GM12878 (cell line): ENCODE measurements at regions of chr7 and their contacts with region 1.

Region 1: DNA sequence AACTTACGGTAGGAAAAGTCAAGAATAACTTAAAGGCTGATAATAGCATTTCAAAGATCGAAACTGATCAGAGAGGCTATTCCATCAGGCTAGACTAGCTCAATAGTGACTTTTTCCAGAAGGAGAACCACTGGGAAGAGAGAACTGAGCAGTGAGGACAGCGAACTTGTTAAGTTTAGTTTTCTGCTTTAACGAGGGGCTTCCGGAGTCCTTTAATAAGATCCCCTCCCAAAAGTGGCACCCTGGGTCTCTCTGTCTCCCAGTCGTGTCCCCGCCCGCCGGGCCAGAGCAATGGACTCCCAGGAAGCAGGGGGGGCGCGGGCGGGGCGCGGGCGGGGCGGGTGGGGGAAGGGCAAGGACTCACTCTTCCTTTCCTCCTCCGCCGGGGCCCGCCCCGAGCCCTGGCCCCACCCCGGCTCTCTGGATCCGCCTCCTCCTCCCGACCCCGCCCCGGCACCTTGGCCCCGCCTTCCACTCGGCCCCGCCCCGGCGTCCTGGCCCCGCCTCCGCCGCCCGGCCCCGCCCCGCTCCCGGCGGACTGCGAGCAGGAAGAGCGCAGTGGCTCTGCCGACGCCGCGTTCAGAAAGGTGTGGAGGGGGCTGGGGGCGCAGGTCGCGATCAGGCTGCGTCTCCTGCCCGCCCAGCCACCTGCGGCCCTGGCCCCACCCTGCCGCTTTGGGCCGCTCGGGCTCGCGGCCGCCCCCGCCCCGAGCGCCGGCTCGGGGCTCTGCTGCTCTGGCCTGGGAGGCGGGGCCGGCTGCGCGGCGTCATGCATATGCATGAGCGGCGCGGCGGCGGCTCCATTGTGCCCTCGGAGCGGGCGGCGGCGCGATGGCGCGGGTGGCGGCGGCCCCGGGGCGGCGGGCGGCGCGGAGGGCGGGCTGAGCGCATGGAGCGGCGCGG is at the start of gene ZMIZ2:
- DNase-seq: no peak
- ATAC-seq: peak; percentile 63
- H3K4me3 ChIP-seq: peak within 1 kb of the TSS; percentile 92
- H3K27ac ChIP-seq: peak within 1 kb of the TSS; percentile 92
- H3K4me1 ChIP-seq: peaks cover 17% of the 10 kb centered on the region
- H3K27me3 ChIP-seq: no peaks in the 10 kb centered on the region
- CTCF ChIP-seq: no peak
- EP300 ChIP-seq: no peak
- POLR2A ChIP-seq: peak; percentile 62; the same call in 1 of the 2 replicates
- RAD21 ChIP-seq: no peak
- polyA plus RNA-seq, gene ZMIZ2: 0.71 to 1.5 TPM

Region 2: GRCh38 chr7:44311561-44312495 is 436.5 kb before region 1 on chr7:
- CTCF ChIA-PET with region 1: no interaction called
- POLR2A ChIA-PET with region 1: no interaction called
- RAD21 ChIA-PET with region 1: no interaction called
- SMC1A ChIA-PET with region 1: no interaction called
- in situ Hi-C with region 1: no loop called
- intact Hi-C with region 1: no loop called
- DNase-seq: no peak
- ATAC-seq: no peak
- H3K4me3 ChIP-seq: no peak overlapping the region
- H3K27ac ChIP-seq: no peak overlapping the region
- H3K4me1 ChIP-seq: no peaks in the 10 kb centered on the region
- H3K27me3 ChIP-seq: peaks cover 0 to 2% of the 10 kb centered on the region in 2 experiments; a peak in 3 of 4 replicates
- CTCF ChIP-seq: no peak
- EP300 ChIP-seq: no peak
- POLR2A ChIP-seq: no peak
- RAD21 ChIP-seq: no peak

Region 3: DNA sequence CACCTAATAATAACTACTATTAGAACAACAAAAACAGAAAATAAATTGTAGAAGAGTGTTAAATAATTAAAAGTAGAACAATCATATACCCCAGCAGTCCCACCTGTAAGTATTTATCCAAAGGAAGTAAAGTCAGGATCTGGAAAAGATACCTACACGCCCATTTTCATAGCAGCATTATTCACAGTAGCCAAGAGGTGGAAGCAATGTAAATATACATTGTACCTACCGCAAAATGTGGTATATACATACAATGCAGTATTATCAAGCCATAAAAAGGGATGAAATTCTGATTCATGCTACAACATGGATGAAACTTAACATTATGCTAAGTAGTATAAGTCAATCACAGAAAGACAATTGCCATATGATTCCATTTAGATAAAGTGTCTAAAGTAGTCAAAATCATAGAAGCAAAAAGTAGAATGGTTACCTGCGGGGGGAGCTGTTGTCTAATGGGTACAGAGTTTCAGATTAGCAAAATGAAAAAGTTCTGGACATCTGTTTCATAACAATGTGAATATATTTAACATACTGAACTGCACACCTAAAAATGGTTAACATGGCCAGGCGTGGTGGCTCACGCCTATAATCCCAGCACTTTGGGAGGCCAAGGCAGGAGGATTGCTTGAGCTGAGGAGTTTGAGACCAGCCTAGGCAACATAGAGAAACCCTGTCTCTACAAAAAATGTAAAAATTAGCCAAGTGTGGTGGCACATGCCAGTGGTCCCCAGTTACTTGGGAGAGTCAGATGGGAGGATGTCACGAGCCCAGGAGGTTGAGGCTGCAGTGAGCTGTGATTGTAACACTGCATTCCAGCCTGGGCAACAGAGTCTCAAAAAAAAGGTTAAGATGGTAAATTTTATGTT is 160.2 kb before region 1 on chr7:
- CTCF ChIA-PET with region 1: interaction called, 3 read pairs
- POLR2A ChIA-PET with region 1: interaction called, 13 read pairs
- RAD21 ChIA-PET with region 1: interaction called, 6 read pairs
- SMC1A ChIA-PET with region 1: interaction called, 6 read pairs
- in situ Hi-C with region 1: no loop called
- intact Hi-C with region 1: loop called (anchors 5 kb)
- DNase-seq: peak; percentile 53
- ATAC-seq: peak; percentile 95
- H3K4me3 ChIP-seq: no peak overlapping the region
- H3K27ac ChIP-seq: no peak overlapping the region
- H3K4me1 ChIP-seq: peaks cover 5% of the 10 kb centered on the region
- H3K27me3 ChIP-seq: no peaks in the 10 kb centered on the region
- CTCF ChIP-seq: peak; percentile 62 to 77 (median 64); a peak in 5 of 6 replicates
- EP300 ChIP-seq: no peak
- POLR2A ChIP-seq: no peak
- RAD21 ChIP-seq: peak; percentile 94

Region 4: DNA sequence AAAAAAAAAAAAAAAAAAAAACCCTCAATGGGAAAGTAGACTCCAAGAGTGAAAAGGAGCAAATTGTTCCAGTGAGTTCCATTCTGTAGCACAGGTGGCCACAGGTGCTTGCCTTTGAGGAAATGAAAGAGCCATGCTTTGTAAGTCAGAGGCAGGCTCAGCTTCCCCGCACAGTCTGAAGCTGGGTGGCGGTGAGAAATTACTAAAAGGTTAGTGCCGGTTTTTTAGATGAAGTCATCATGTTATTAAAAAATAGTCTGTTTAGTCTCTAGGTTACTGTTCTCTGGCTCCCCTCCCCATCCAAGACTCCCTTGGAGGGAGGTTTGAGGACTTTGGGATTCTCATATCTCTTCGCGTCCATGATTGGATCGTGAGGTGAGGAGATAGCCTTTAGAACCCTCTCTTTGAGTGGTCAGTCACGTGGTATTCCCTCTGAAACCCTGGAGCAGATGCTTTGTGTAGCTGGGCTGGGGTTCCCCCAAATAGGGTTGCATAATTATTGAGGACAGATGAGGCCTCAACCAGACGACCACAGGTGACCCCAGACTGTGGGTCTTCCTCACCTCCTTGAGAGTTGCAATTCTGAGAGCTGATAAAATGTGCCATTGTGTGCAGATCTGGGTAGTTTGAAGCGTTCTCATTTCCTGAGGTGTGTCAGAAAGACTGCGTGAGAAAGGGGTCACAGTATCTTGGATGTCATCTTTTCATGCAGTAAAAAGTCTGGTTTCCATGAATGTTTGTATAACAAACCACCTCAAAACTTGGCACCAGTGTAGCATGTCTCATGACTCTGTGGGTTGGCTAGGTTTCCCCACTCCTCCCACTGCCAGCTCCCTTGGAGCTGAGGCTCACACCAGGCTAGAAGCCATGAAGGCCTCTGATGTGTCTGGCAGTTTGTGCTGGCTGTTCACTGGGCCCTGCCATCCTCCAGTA is 114.8 kb before region 1 on chr7:
- CTCF ChIA-PET with region 1: interaction called, 17 read pairs
- POLR2A ChIA-PET with region 1: interaction called, 55 read pairs
- RAD21 ChIA-PET with region 1: interaction called, 107 read pairs
- SMC1A ChIA-PET with region 1: interaction called, 79 read pairs
- in situ Hi-C with region 1: no loop called
- intact Hi-C with region 1: loop called (anchors 1 kb)
- DNase-seq: peak; percentile 88
- ATAC-seq: peak; percentile 71
- H3K4me3 ChIP-seq: peak overlapping the region; percentile 39
- H3K27ac ChIP-seq: peak overlapping the region; percentile 68
- H3K4me1 ChIP-seq: peaks cover 87% of the 10 kb centered on the region
- H3K27me3 ChIP-seq: no peaks in the 10 kb centered on the region
- CTCF ChIP-seq: no peak
- EP300 ChIP-seq: peak; percentile 58 to 78; a peak in 3 of 4 replicates
- POLR2A ChIP-seq: peak; percentile 35; the same call in 1 of the 2 replicates
- RAD21 ChIP-seq: peak; percentile 26; the same call in 1 of the 2 replicates

Region 5: DNA sequence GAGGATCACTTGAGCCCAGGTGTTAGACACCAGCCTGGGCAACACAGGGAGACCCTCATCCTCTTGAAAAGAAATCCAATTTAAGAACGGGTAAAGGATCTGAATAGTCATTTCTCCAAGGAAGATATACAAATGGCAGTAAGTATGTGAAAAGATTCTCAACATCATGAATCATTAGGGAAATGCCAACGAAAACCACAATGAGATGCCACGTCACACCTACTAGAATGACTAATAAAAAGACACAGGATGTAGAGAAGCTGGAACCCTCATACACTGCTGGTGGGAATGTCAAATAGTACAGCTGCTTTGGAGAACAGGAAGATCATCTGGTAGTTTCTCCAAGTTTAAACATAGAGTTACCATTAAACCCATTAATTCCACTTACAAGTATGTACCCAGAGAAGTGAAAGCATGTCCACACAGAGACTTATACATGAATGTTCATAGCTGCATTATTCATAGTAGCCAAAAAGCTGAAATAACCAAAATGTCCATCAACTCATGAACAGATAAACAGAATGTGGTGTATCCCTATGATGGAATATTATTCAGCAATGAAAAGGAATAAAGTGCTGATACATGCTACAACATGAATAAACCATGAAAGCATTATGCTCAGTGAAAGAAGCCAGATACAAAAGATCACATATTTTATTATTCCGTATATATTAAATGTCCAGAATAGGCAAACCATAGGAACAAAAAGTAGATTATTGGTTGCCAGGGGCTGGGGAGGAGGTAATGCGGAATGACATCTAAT is 12.7 kb before region 1 on chr7:
- CTCF ChIA-PET with region 1: interaction called, 4 read pairs
- POLR2A ChIA-PET with region 1: interaction called, 31 read pairs
- RAD21 ChIA-PET with region 1: interaction called, 10 read pairs
- SMC1A ChIA-PET with region 1: interaction called, 8 read pairs
- in situ Hi-C with region 1: no loop called
- intact Hi-C with region 1: no loop called
- DNase-seq: peak; percentile 78
- ATAC-seq: peak; percentile 79
- H3K4me3 ChIP-seq: no peak overlapping the region; the same call in 1 of the 2 replicates
- H3K27ac ChIP-seq: peak overlapping the region; percentile 20; the same call in 1 of the 2 replicates
- H3K4me1 ChIP-seq: peaks cover 9% of the 10 kb centered on the region
- H3K27me3 ChIP-seq: no peaks in the 10 kb centered on the region
- CTCF ChIP-seq: no peak
- EP300 ChIP-seq: peak; percentile 42 to 58; a peak in 2 of 4 replicates
- POLR2A ChIP-seq: no peak
- RAD21 ChIP-seq: no peak

Region 6: DNA sequence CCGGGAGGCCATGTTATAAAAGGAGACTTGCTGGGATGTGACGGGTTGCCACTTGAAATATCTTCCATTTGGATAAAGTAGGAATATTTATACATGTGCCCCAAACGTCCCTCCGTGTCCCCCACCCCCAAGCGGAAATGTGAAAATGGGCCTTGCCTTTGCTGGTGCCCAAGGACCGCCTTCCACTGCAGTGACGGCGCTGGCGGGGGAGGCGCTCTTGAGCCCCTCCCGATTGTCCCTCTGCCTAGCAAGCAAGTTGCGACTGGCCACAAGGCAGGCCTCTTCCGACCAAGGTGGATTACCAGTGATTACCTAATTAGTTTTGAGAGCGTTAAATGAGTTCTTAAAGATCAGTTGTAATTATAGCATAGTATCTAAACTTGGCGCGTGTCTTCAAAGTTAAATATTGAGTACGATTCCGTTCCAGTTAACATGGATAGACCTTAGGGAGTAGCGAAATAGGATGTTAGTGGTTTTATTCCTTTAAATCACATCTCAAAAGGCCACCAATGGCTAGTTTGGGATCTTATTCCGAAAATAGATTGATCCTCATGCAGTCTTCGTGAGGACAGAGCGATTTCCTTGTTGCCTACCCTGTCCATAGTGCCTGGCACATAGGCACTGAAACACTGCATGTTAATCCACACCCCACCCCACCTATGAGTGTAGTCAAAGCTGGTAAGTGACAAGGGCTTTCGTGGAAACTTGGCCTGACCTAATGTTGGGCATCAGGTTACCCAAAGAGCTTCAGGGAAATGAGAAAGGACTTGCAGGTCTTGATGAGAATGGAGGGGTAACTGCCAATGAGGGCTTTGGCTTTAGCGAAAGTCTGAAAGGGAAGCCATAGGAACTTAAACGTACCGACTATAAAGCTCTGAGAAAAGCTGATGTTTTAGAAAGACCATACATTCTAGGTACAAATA is 49.3 kb after region 1 on chr7:
- CTCF ChIA-PET with region 1: no interaction called
- POLR2A ChIA-PET with region 1: interaction called, 9 read pairs
- RAD21 ChIA-PET with region 1: interaction called, 13 read pairs
- SMC1A ChIA-PET with region 1: interaction called, 13 read pairs
- in situ Hi-C with region 1: no loop called
- intact Hi-C with region 1: loop called (anchors 1 kb)
- DNase-seq: no peak
- ATAC-seq: peak; percentile 77
- H3K4me3 ChIP-seq: peak overlapping the region; percentile 96
- H3K27ac ChIP-seq: peak overlapping the region; percentile 99
- H3K4me1 ChIP-seq: peaks cover 3% of the 10 kb centered on the region
- H3K27me3 ChIP-seq: no peaks in the 10 kb centered on the region
- CTCF ChIP-seq: peak; percentile 57 to 61 (median 61)
- EP300 ChIP-seq: no peak
- POLR2A ChIP-seq: no peak
- RAD21 ChIP-seq: peak; percentile 24; the same call in 1 of the 2 replicates

Region 7: DNA sequence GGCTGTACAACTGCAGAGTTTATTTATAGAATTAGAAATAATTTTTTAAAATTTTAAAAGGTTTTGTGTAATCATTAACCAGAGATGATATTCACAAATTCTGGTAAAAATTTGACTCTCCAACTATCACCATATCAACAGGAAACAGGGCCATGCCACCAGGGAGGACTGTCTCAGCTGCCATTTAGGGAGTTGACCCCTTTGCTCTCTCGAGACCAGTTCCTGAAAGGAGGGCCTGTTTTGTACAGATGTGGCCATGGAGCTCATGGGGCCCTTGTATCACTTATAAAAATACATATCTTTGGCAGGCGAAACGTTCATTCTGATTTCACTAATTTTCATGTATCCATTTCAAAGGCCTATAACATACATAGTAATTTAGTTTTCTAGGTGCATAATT is 79.3 kb after region 1 on chr7:
- CTCF ChIA-PET with region 1: no interaction called
- POLR2A ChIA-PET with region 1: no interaction called
- RAD21 ChIA-PET with region 1: no interaction called
- SMC1A ChIA-PET with region 1: no interaction called
- in situ Hi-C with region 1: no loop called
- intact Hi-C with region 1: no loop called
- DNase-seq: no peak
- ATAC-seq: no peak
- H3K4me3 ChIP-seq: no peak overlapping the region
- H3K27ac ChIP-seq: no peak overlapping the region
- H3K4me1 ChIP-seq: no peaks in the 10 kb centered on the region
- H3K27me3 ChIP-seq: no peaks in the 10 kb centered on the region
- CTCF ChIP-seq: no peak
- EP300 ChIP-seq: no peak
- POLR2A ChIP-seq: no peak
- RAD21 ChIP-seq: no peak